GM10248 (cell line): ENCODE measurements at regions of chr20 and their contacts with region 1.

Region 1: GRCh38 chr20:20860078-20860806 is 147.8 kb upstream of the RALGAPA2 start:
- DNase-seq: peak; percentile 76
- CTCF ChIP-seq: peak; percentile 90

Region 2: GRCh38 chr20:20824924-20825584 is 35.2 kb before region 1 on chr20:
- CTCF ChIA-PET with region 1: interaction called, 16 read pairs
- POLR2A ChIA-PET with region 1: no interaction called
- DNase-seq: peak; percentile 83
- CTCF ChIP-seq: peak; percentile 80

Region 3: DNA sequence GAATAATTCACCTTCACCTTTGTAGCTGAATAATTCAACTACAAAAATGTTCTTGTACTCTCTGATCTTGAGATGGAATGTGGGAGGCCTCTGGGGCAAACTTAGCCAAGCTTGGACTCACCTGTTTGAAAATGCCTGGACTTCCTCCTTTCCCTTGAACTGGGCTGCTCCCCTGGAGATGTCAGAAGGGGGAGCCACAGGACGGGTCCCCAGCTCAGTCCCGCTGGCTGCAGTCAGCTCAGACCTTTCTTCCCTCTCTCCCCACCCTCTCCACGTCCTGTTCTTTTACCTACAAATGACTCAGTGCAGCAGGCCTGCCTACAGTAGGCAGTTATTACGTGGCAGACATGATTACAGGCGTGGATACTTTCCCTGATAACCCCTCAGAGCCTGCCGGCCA is 16.3 kb before region 1 on chr20:
- CTCF ChIA-PET with region 1: interaction called, 24 read pairs
- POLR2A ChIA-PET with region 1: no interaction called
- DNase-seq: no peak
- CTCF ChIP-seq: no peak

Region 4: GRCh38 chr20:20875716-20876115 is 15.5 kb after region 1 on chr20:
- CTCF ChIA-PET with region 1: interaction called, 47 read pairs
- POLR2A ChIA-PET with region 1: no interaction called
- DNase-seq: no peak
- CTCF ChIP-seq: no peak

Region 5: GRCh38 chr20:21380711-21381110 is 520.5 kb after region 1 on chr20:
- CTCF ChIA-PET with region 1: no interaction called
- POLR2A ChIA-PET with region 1: no interaction called
- DNase-seq: no peak
- CTCF ChIP-seq: no peak

Region 6: GRCh38 chr20:21505161-21505809 is 645.0 kb after region 1 on chr20:
- CTCF ChIA-PET with region 1: interaction called, 94 read pairs
- POLR2A ChIA-PET with region 1: no interaction called
- DNase-seq: peak; percentile 83
- CTCF ChIP-seq: peak; percentile 98

Region 7: DNA sequence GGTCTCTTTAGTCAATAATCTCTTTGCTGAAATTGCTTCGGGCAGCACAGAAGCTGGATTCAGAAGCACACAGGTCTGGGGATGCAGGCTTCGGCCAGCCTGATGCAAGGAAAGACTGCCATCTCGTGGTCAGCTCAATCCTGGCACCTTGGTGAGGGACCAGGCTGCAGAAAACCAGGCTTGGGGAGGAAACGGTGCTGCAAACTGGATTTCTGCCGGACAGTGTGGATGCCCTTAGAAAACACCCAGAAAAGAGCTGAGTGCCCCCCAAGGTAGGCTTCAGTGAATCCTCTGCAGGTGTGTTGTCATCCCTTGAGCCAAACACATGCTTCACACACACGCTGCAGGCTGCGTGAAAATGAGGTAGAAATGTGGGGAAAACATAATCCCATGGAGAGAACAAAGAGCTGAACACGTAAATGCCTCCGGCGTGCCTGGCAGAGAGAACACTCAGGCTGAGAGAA is 755.4 kb after region 1 on chr20:
- CTCF ChIA-PET with region 1: interaction called, 11 read pairs
- POLR2A ChIA-PET with region 1: no interaction called
- DNase-seq: peak; percentile 66
- CTCF ChIP-seq: peak; percentile 75